CD4-positive, alpha-beta T cell (primary cell): ENCODE measurements at regions of chrX and their contacts with region 1.

Region 1: DNA sequence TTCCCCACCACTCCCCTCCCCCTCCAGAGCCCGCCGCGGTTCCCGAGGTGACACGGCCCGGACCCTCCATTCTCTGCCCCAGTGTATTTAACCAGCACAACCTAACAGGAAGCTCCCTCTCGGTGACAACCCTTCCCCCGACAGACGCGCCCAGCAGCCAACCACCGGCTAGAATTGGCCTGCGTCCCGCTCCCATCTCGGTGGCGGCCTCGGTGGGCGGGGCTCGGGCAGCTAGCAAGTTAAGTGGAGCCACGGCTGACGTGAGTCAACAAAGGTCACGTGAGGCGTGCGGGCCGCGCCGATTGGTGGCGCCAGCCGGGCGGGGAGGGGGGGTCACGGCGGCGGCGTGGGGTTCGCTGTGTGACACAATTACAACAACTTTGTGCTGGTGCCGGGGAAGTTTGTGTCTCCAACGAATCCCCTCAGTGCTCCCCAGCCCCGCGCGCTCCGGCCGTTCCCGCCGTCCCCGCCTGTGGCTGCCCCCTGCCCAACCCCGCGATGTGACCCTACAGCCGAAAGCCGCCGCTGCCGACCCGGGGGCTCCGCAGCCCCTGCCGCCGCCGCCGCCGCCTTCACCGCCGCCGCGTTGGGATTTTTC is at the start of gene KDM6A:
- DNase-seq: peak; percentile 91 to 100 (median 96)
- ATAC-seq: peak; percentile 87
- H3K4me3 ChIP-seq: peak within 1 kb of the TSS; percentile 82
- H3K4me3 Mint-ChIP-seq: peak within 1 kb of the TSS; percentile 99
- H3K27ac ChIP-seq: peak within 1 kb of the TSS; percentile 93 to 99
- H3K27ac Mint-ChIP-seq: peak within 1 kb of the TSS; percentile 95
- H3K4me1 ChIP-seq: peaks cover 6% of the 10 kb centered on the region
- H3K4me1 Mint-ChIP-seq: peaks cover 35% of the 10 kb centered on the region
- H3K27me3 ChIP-seq: no peaks in the 10 kb centered on the region
- H3K27me3 Mint-ChIP-seq: no peaks in the 10 kb centered on the region
- CTCF ChIP-seq: no peak
- total RNA-seq, gene KDM6A: 59.6 to 63.9 TPM

Region 2: GRCh38 chrX:43108828-43109227 is 1764.1 kb before region 1 on chrX:
- CTCF ChIA-PET with region 1: no interaction called
- POLR2A ChIA-PET with region 1: no interaction called
- intact Hi-C with region 1: no loop called
- DNase-seq: no peak
- ATAC-seq: no peak
- H3K4me3 ChIP-seq: no peak overlapping the region
- H3K4me3 Mint-ChIP-seq: no peak overlapping the region
- H3K27ac ChIP-seq: no peak overlapping the region
- H3K27ac Mint-ChIP-seq: no peak overlapping the region
- H3K4me1 ChIP-seq: peaks cover 7% of the 10 kb centered on the region
- H3K4me1 Mint-ChIP-seq: peaks cover 19% of the 10 kb centered on the region
- H3K27me3 ChIP-seq: no peaks in the 10 kb centered on the region
- H3K27me3 Mint-ChIP-seq: no peaks in the 10 kb centered on the region
- CTCF ChIP-seq: no peak

Region 3: GRCh38 chrX:44253575-44253942 is 619.4 kb before region 1 on chrX:
- CTCF ChIA-PET with region 1: no interaction called
- POLR2A ChIA-PET with region 1: no interaction called
- intact Hi-C with region 1: loop called in 1 of 2 experiments (anchors 5 kb)
- DNase-seq: no peak
- ATAC-seq: no peak
- H3K4me3 ChIP-seq: peak overlapping the region; percentile 19
- H3K4me3 Mint-ChIP-seq: peak overlapping the region; percentile 81
- H3K27ac ChIP-seq: peak overlapping the region; percentile 62
- H3K27ac Mint-ChIP-seq: peak overlapping the region; percentile 92
- H3K4me1 ChIP-seq: peaks cover 15% of the 10 kb centered on the region
- H3K4me1 Mint-ChIP-seq: peaks cover 38% of the 10 kb centered on the region
- H3K27me3 ChIP-seq: no peaks in the 10 kb centered on the region
- H3K27me3 Mint-ChIP-seq: no peaks in the 10 kb centered on the region
- CTCF ChIP-seq: no peak

Region 4: DNA sequence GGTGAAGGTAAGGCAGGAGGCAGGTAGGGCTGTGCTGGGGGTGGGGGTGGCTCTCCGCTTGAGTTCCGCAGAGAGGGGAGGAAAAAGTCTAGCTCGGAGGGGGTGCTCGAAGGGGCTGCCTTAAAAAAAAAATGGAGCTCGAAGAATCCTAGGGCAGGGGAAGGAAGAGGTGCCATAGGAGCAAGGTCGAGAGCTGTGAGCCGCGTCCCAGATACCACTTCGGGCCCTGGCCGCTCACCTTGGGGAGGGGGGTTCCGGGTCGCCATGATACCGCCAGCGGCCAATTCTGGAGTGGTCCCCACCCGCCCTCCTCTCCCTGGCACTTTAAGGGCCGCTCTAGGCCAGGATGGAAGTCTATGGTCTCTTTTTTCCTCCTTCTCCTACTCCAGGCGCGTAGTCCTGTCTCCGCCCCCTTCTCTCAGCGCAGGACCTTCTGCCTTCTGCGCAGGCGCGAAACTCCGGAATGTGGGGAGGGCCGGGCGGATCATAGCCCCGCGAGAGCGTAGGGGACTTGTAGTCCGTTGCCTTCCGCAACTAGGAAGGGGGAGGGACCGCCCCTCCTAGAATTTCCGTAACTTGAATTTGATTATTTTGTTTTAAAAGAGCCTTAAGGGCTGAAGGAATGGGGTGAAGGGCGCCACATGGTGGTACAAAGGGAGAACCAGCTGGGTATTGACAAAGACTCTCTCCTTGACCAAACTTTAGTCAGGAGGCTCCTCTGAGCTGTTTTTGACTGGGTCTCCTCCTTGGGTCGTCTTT is 330.2 kb before region 1 on chrX and contains the start of gene FUNDC1:
- CTCF ChIA-PET with region 1: no interaction called
- POLR2A ChIA-PET with region 1: no interaction called
- intact Hi-C with region 1: loop called in 1 of 2 experiments (anchors 10 kb)
- DNase-seq: peak; percentile 77 to 97 (median 90)
- ATAC-seq: peak; percentile 94
- H3K4me3 ChIP-seq: peak within 1 kb of the TSS; percentile 88
- H3K4me3 Mint-ChIP-seq: peak within 1 kb of the TSS; percentile 100
- H3K27ac ChIP-seq: peak within 1 kb of the TSS; percentile 46 to 54
- H3K27ac Mint-ChIP-seq: peak within 1 kb of the TSS; percentile 97
- H3K4me1 ChIP-seq: peaks cover 9% of the 10 kb centered on the region
- H3K4me1 Mint-ChIP-seq: peaks cover 37% of the 10 kb centered on the region
- H3K27me3 ChIP-seq: no peaks in the 10 kb centered on the region
- H3K27me3 Mint-ChIP-seq: no peaks in the 10 kb centered on the region
- CTCF ChIP-seq: no peak
- total RNA-seq, gene FUNDC1: 4.8 to 5.4 TPM

Region 5: DNA sequence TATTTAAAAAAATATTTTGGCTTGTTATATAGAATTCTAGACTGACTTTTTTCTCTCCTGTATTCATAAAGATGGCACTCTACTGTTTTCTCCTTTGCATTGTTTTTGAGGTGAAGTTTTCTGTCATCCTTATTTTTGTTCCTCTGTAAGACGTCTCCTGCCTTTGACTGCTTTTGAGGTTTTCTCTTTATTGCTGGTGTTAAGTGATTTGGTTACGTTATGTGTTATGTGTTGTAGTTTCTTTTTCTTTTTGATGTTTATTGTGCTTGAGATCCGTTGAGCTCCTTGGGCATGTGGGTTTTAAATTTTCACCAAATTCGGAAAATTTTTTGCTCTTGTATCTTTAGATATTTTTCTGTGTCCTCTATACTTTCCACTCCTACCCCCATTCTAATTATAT is 50.1 kb after region 1 on chrX:
- CTCF ChIA-PET with region 1: no interaction called
- POLR2A ChIA-PET with region 1: interaction called, 3 read pairs
- intact Hi-C with region 1: loop called in 1 of 2 experiments (anchors 10 kb)
- DNase-seq: peak in 2 of 14 experiments; percentile 11 to 24
- ATAC-seq: peak; percentile 69
- H3K4me3 ChIP-seq: no peak overlapping the region
- H3K4me3 Mint-ChIP-seq: peak overlapping the region; percentile 44
- H3K27ac ChIP-seq: no peak overlapping the region
- H3K27ac Mint-ChIP-seq: peak overlapping the region; percentile 66
- H3K4me1 ChIP-seq: peaks cover 18% of the 10 kb centered on the region
- H3K4me1 Mint-ChIP-seq: peaks cover 68% of the 10 kb centered on the region
- H3K27me3 ChIP-seq: no peaks in the 10 kb centered on the region
- H3K27me3 Mint-ChIP-seq: no peaks in the 10 kb centered on the region
- CTCF ChIP-seq: no peak

Region 6: GRCh38 chrX:44937606-44938005 is 64.7 kb after region 1 on chrX:
- CTCF ChIA-PET with region 1: no interaction called
- POLR2A ChIA-PET with region 1: interaction called, 3 read pairs
- intact Hi-C with region 1: loop called in 1 of 2 experiments (anchors 10 kb)
- DNase-seq: no peak
- ATAC-seq: no peak
- H3K4me3 ChIP-seq: no peak overlapping the region
- H3K4me3 Mint-ChIP-seq: peak overlapping the region; percentile 58
- H3K27ac ChIP-seq: no peak overlapping the region
- H3K27ac Mint-ChIP-seq: peak overlapping the region; percentile 36
- H3K4me1 ChIP-seq: peaks cover 14% of the 10 kb centered on the region
- H3K4me1 Mint-ChIP-seq: peaks cover 67% of the 10 kb centered on the region
- H3K27me3 ChIP-seq: no peaks in the 10 kb centered on the region
- H3K27me3 Mint-ChIP-seq: no peaks in the 10 kb centered on the region
- CTCF ChIP-seq: no peak